CD4-positive, alpha-beta T cell (primary cell): ENCODE measurements at regions of chr1 and their contacts with region 1.

Region 1: DNA sequence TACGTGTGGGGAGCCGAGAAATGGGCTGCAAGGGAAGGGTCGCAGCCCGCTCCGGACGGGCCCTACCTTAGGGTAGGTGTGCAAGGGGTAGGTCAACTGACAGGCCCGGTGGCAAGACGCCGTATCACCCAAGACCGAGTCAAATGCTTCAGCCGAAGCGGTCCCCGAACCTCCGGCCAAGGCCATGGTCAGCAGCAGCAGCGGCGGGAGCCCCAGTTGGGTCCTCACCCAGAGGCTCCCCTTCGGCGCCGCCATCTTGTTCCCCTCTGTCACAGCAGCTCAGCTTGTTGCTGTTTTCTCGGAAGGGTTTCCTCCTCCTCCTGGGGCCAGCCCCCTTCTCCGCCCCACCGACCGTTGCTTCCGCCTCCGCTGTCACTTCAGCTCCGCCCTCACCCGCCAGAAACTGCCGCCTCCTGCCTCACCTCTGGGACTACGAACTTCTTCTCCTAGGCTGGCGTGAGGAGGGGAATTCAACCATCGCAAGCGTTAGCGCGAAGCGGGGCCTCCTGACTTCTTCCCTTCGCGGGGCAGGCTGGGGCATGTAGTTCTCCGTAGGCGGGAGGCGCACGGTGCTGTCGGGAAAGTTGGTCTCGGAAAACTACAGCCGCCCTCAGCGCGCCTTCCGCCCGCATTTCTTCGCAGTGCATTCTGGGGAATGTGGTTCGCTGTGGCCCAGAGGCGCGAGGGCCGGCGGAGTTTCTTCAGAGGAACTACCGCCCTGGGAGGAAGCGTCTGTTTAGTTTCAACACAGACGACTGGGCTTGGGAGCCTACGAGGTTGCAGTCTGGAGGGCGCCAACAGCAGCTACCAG is at the starts of genes TCEANC2 and TMEM59:
- DNase-seq: peak; percentile 93 to 99 (median 95)
- ATAC-seq: peak; percentile 89
- H3K4me3 ChIP-seq: peak within 1 kb of the TSS; percentile 89
- H3K4me3 Mint-ChIP-seq: no peak within 1 kb of the TSS
- H3K27ac ChIP-seq: peak within 1 kb of the TSS; percentile 71 to 90
- H3K27ac Mint-ChIP-seq: no peak within 1 kb of the TSS
- H3K4me1 ChIP-seq: peaks cover 35% of the 10 kb centered on the region
- H3K4me1 Mint-ChIP-seq: peaks cover 45% of the 10 kb centered on the region
- H3K27me3 ChIP-seq: no peaks in the 10 kb centered on the region
- H3K27me3 Mint-ChIP-seq: no peaks in the 10 kb centered on the region
- CTCF ChIP-seq: no peak
- total RNA-seq, gene TCEANC2: 2.3 to 2.7 TPM
- total RNA-seq, gene TMEM59: 128 TPM

Region 2: GRCh38 chr1:53326088-53326597 is 727.0 kb before region 1 on chr1:
- CTCF ChIA-PET with region 1: no interaction called
- POLR2A ChIA-PET with region 1: no interaction called
- intact Hi-C with region 1: loop called in 1 of 2 experiments (anchors 10 kb)
- DNase-seq: peak; percentile 69 to 94 (median 87)
- ATAC-seq: peak; percentile 78
- H3K4me3 ChIP-seq: peak overlapping the region; percentile 86
- H3K4me3 Mint-ChIP-seq: peak overlapping the region; percentile 83
- H3K27ac ChIP-seq: peak overlapping the region in 1 of 2 donors; percentile 65
- H3K27ac Mint-ChIP-seq: peak overlapping the region; percentile 79
- H3K4me1 ChIP-seq: peaks cover 26% of the 10 kb centered on the region
- H3K4me1 Mint-ChIP-seq: peaks cover 17% of the 10 kb centered on the region
- H3K27me3 ChIP-seq: no peaks in the 10 kb centered on the region
- H3K27me3 Mint-ChIP-seq: no peaks in the 10 kb centered on the region
- CTCF ChIP-seq: no peak

Region 3: GRCh38 chr1:53945433-53946251 is 107.5 kb before region 1 on chr1 and contains the start of gene IFT25:
- CTCF ChIA-PET with region 1: no interaction called
- POLR2A ChIA-PET with region 1: interaction called, 54 read pairs
- intact Hi-C with region 1: loop called (anchors 1 to 2 kb)
- DNase-seq: peak; percentile 96 to 100 (median 98)
- ATAC-seq: peak; percentile 77
- H3K4me3 ChIP-seq: peak within 1 kb of the TSS; percentile 89
- H3K4me3 Mint-ChIP-seq: peak within 1 kb of the TSS; percentile 99
- H3K27ac ChIP-seq: peak within 1 kb of the TSS; percentile 60 to 80
- H3K27ac Mint-ChIP-seq: peak within 1 kb of the TSS; percentile 91
- H3K4me1 ChIP-seq: peaks cover 28% of the 10 kb centered on the region
- H3K4me1 Mint-ChIP-seq: peaks cover 59% of the 10 kb centered on the region
- H3K27me3 ChIP-seq: no peaks in the 10 kb centered on the region
- H3K27me3 Mint-ChIP-seq: no peaks in the 10 kb centered on the region
- CTCF ChIP-seq: no peak
- total RNA-seq, gene IFT25: 12.7 to 13.9 TPM

Region 4: DNA sequence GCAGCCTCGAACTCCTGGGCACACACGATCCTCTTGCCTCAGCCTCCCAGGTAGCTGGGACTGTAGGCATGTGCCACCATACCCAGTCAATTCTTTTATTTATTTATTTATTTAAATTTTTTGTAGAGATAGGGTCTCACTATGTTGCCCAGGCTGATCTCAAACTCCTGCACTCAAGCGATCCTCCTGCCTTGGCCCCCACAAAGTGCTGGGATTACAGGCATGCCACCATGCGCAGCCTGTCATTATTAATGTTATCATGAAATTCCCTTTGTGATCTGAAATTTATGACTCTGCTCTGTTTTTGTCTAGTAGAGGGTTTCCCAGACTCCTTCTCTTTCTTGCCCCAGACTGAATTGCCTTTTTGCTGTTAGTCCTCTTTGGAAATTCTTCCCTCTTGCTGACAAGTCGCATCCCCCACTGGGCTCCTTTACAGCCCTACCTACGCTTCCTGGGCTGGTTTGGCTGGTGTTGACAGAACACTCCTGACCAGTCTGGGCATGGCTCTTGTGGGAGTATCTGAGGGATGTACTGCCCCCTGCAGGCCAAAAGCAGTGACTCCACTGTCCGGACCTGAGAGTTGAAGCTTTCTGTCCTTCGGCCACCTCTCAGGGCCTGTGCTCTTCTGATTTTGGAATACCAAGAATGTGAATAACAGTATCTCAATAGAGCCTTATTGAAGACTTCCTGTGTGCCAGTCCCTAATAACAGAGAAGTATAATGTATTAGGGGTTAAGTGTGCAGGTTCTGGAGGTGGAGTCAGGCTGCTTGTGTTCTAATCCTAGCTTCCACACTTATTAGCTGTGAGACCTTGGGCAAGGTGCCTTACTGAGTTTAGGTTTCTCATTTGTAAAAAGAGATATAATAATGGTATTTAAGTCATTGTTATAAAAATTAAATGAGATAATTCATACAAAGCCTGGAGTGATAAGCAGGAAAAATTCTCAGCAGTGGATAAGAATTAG is 28.4 kb after region 1 on chr1:
- CTCF ChIA-PET with region 1: interaction called, 3 read pairs
- POLR2A ChIA-PET with region 1: no interaction called
- intact Hi-C with region 1: loop called in 1 of 2 experiments (anchors 1 kb)
- DNase-seq: peak; percentile 10 to 76 (median 48)
- ATAC-seq: peak; percentile 75
- H3K4me3 ChIP-seq: no peak overlapping the region
- H3K4me3 Mint-ChIP-seq: no peak overlapping the region
- H3K27ac ChIP-seq: no peak overlapping the region
- H3K27ac Mint-ChIP-seq: no peak overlapping the region
- H3K4me1 ChIP-seq: no peaks in the 10 kb centered on the region
- H3K4me1 Mint-ChIP-seq: peaks cover 4% of the 10 kb centered on the region
- H3K27me3 ChIP-seq: no peaks in the 10 kb centered on the region
- H3K27me3 Mint-ChIP-seq: no peaks in the 10 kb centered on the region
- CTCF ChIP-seq: peak; percentile 63

Region 5: GRCh38 chr1:54287176-54287650 is 234.1 kb after region 1 on chr1:
- CTCF ChIA-PET with region 1: no interaction called
- POLR2A ChIA-PET with region 1: no interaction called
- intact Hi-C with region 1: no loop called
- DNase-seq: peak; percentile 32 to 81 (median 64)
- ATAC-seq: peak; percentile 76
- H3K4me3 ChIP-seq: no peak overlapping the region
- H3K4me3 Mint-ChIP-seq: peak overlapping the region; percentile 83
- H3K27ac ChIP-seq: peak overlapping the region; percentile 28 to 62
- H3K27ac Mint-ChIP-seq: peak overlapping the region; percentile 90
- H3K4me1 ChIP-seq: peaks cover 92% of the 10 kb centered on the region
- H3K4me1 Mint-ChIP-seq: peaks cover 91% of the 10 kb centered on the region
- H3K27me3 ChIP-seq: no peaks in the 10 kb centered on the region
- H3K27me3 Mint-ChIP-seq: no peaks in the 10 kb centered on the region
- CTCF ChIP-seq: no peak

Region 6: DNA sequence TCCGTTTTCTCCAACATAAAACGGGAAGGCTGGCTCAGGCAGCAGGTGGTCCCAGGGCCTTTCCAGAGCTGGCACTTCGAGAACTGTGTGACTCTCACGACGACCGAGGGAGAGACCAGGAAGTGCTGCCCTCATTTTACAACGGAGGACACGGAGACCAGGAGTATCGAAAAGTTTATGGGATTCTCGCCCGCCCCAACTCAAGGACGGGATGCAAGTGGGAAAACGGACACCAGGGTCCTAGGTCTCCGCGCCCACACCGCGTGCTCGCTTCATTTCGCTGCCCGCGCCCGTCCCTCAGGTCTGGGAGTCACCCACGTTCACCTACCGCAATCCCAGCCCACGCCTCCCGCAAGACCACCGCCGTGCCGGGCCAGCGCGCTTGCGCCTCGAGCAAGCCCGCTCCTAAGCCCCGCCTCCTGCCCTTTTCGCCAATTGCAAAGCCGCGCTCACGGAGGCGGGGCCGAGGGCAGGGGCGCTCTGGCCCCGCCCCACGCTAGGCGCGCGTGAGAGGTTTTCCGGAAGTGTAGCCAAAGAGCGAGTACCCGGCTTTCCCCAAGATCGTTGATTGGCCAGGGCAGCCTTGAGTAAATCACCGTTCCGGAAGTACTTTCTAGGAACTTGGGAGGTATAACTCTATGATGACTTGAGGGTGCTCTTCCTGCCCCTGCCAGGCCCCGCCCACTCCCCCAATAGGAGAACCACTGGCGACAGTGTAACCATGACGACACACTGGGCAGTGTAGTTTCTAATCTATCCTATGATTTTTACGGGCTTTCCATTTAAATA is 711.2 kb after region 1 on chr1 and contains the start of gene PARS2:
- CTCF ChIA-PET with region 1: no interaction called
- POLR2A ChIA-PET with region 1: interaction called, 7 read pairs
- intact Hi-C with region 1: loop called (anchors 1 to 2 kb)
- DNase-seq: peak; percentile 88 to 99 (median 94)
- ATAC-seq: peak; percentile 96
- H3K4me3 ChIP-seq: peak within 1 kb of the TSS; percentile 98
- H3K4me3 Mint-ChIP-seq: peak within 1 kb of the TSS; percentile 98
- H3K27ac ChIP-seq: peak within 1 kb of the TSS in 1 of 2 donors; percentile 71
- H3K27ac Mint-ChIP-seq: peak within 1 kb of the TSS; percentile 70
- H3K4me1 ChIP-seq: peaks cover 8% of the 10 kb centered on the region
- H3K4me1 Mint-ChIP-seq: peaks cover 26% of the 10 kb centered on the region
- H3K27me3 ChIP-seq: no peaks in the 10 kb centered on the region
- H3K27me3 Mint-ChIP-seq: no peaks in the 10 kb centered on the region
- CTCF ChIP-seq: no peak
- total RNA-seq, gene PARS2: not detected